ENCODE measurements at regions of chr10 and their contacts with region 1.

Region 1: GRCh38 chr10:80662577-80663261 is 125.0 kb downstream of the SH2D4B start:
- DNase-seq: peak; percentile 83
- ATAC-seq: peak; percentile 74
- H3K4me3 Mint-ChIP-seq: peak overlapping the region; percentile 24
- H3K27ac Mint-ChIP-seq: no peak overlapping the region
- H3K4me1 Mint-ChIP-seq: peaks cover 2% of the 10 kb centered on the region
- H3K27me3 Mint-ChIP-seq: peaks cover 17% of the 10 kb centered on the region

Region 2: GRCh38 chr10:79209340-79209739 is 1453.4 kb before region 1 on chr10:
- CTCF ChIA-PET with region 1: no interaction called
- POLR2A ChIA-PET with region 1: no interaction called
- intact Hi-C with region 1: no loop called
- DNase-seq: no peak
- ATAC-seq: no peak
- H3K4me3 Mint-ChIP-seq: no peak overlapping the region
- H3K27ac Mint-ChIP-seq: no peak overlapping the region
- H3K4me1 Mint-ChIP-seq: no peaks in the 10 kb centered on the region
- H3K27me3 Mint-ChIP-seq: no peaks in the 10 kb centered on the region

Region 3: DNA sequence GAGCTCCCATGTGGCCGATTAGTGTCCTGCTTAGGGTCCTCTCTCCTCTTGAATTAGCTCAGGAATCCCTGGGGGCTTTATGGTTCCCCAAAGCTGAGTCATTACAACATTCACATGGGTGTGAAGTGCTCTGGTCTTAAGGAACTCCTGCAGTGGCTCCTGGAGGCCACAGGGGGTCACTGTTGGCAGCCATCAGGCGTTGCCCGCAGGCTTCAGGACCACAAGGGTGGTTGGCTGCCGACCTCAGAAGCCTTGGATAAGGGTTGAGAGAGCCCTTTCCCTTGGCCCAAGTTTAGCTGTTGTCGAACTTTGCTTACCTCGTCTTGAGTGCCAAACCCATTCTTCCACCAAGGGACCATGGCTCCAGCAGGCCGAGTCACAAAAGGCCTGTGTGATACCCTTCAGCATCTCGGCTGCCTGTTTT is 63.3 kb before region 1 on chr10:
- CTCF ChIA-PET with region 1: interaction called, 10 read pairs
- POLR2A ChIA-PET with region 1: no interaction called
- intact Hi-C with region 1: no loop called
- DNase-seq: peak; percentile 64
- ATAC-seq: peak; percentile 80
- H3K4me3 Mint-ChIP-seq: no peak overlapping the region
- H3K27ac Mint-ChIP-seq: no peak overlapping the region
- H3K4me1 Mint-ChIP-seq: no peaks in the 10 kb centered on the region
- H3K27me3 Mint-ChIP-seq: no peaks in the 10 kb centered on the region

Region 4: GRCh38 chr10:80705899-80706298 is 43.2 kb after region 1 on chr10:
- CTCF ChIA-PET with region 1: interaction called, 11 read pairs
- POLR2A ChIA-PET with region 1: no interaction called
- intact Hi-C with region 1: no loop called
- DNase-seq: no peak
- ATAC-seq: no peak
- H3K4me3 Mint-ChIP-seq: no peak overlapping the region
- H3K27ac Mint-ChIP-seq: no peak overlapping the region
- H3K4me1 Mint-ChIP-seq: no peaks in the 10 kb centered on the region
- H3K27me3 Mint-ChIP-seq: no peaks in the 10 kb centered on the region

Region 5: GRCh38 chr10:80786322-80786721 is 123.6 kb after region 1 on chr10:
- CTCF ChIA-PET with region 1: no interaction called
- POLR2A ChIA-PET with region 1: no interaction called
- intact Hi-C with region 1: no loop called
- DNase-seq: no peak
- ATAC-seq: no peak
- H3K4me3 Mint-ChIP-seq: no peak overlapping the region
- H3K27ac Mint-ChIP-seq: no peak overlapping the region
- H3K4me1 Mint-ChIP-seq: no peaks in the 10 kb centered on the region
- H3K27me3 Mint-ChIP-seq: peaks cover 3% of the 10 kb centered on the region

Region 6: DNA sequence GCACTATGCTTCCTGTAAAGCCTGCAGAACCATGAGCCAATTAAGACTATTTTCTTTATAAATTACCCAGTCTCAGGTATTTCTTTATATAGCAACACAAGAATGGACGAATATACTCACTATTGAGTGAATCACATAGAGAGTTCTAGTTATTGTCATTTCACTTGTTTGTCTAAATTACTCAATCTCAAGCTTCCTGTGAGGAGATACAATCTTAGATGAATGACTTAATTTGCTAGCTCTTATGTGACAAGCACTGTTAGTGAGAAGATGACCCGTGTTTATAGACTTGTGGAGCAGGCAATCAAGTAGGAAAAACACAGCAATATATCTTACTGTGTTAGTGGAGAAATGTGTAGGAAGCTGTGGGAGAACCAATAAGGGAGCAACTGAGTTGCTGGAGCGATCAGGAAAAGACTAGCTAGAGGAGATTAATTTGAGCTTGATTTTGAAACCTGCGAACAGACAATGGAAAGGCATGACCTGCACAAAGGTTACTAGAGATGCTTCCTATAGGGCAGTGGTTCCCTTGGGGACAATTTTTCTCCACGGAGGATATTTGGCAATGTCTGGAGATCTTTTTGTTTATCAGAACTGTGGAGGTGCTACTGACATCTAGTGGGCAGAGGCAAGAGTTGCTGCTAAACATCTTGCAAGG is 356.1 kb after region 1 on chr10:
- CTCF ChIA-PET with region 1: interaction called, 5 read pairs
- POLR2A ChIA-PET with region 1: no interaction called
- intact Hi-C with region 1: loop called in 1 of 2 experiments (anchors 1 kb)
- DNase-seq: peak; percentile 26
- ATAC-seq: peak; percentile 70
- H3K4me3 Mint-ChIP-seq: no peak overlapping the region
- H3K27ac Mint-ChIP-seq: no peak overlapping the region
- H3K4me1 Mint-ChIP-seq: no peaks in the 10 kb centered on the region
- H3K27me3 Mint-ChIP-seq: peaks cover 8% of the 10 kb centered on the region